Activated CD4-positive, alpha-beta T cell treated with anti-CD3 and anti-CD28 coated beads, Interleukin-2, amount 10 ng/mL, durations not matched to agents 24 days and 14 days (primary cell): ENCODE measurements at regions of chr7 and their contacts with region 1.

Region 1: GRCh38 chr7:44638611-44639557 is 32.5 kb downstream of the OGDH start:
- DNase-seq: peak; percentile 95
- H3K4me3 Mint-ChIP-seq: peak overlapping the region; percentile 82
- H3K27ac Mint-ChIP-seq: peak overlapping the region; percentile 99
- H3K4me1 Mint-ChIP-seq: peaks cover 66% of the 10 kb centered on the region
- H3K27me3 Mint-ChIP-seq: no peaks in the 10 kb centered on the region

Region 2: DNA sequence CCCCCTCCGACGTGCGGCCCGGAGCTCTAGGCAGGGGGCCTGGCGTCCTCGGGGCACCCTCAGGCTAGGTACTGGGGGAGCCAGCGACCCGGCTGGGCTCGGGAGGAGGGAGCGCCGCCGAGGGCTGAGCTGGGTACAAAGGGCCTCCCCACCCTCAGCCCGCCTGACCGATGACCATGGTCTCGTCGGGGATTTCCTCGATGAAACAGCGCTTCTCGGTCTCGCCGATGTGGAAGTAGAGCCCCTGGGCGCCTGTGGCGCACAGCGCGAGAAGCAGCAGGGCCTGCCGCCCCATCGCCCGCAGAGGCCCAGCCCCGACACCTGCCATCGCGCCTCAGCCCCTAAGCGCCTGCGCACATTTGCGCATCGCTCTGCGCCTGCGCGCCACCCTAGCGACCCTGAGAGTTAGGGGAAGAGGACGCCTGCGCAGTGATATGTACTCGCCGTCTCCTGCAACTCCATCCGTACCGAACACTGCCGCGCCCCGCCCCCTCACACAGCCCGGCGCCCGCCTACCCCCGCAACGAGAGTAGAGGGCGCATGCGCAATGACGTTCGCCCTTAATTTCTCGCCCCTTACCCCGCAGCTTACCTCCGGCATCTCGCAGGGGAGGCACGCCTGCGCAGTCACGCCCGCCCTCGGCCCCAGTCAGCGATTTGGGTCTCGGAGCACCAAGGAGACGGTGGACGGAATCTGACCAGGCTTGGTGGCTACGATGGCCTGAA is 56.8 kb before region 1 on chr7 and contains the start of gene TMED4:
- intact Hi-C with region 1: loop called (anchors 2 kb)
- DNase-seq: peak; percentile 100
- H3K4me3 Mint-ChIP-seq: peak within 1 kb of the TSS; percentile 92
- H3K27ac Mint-ChIP-seq: peak within 1 kb of the TSS; percentile 92
- H3K4me1 Mint-ChIP-seq: peaks cover 35% of the 10 kb centered on the region
- H3K27me3 Mint-ChIP-seq: peaks cover 4% of the 10 kb centered on the region
- total RNA-seq, gene TMED4: 78.4 and 80.2 TPM in 2 replicates

Region 3: GRCh38 chr7:44622307-44623151 is 16.4 kb before region 1 on chr7:
- intact Hi-C with region 1: loop called (anchors 1 kb)
- DNase-seq: peak; percentile 83
- H3K4me3 Mint-ChIP-seq: peak overlapping the region; percentile 53
- H3K27ac Mint-ChIP-seq: peak overlapping the region; percentile 84
- H3K4me1 Mint-ChIP-seq: peaks cover 71% of the 10 kb centered on the region
- H3K27me3 Mint-ChIP-seq: no peaks in the 10 kb centered on the region

Region 4: GRCh38 chr7:44748045-44748947 is 109.4 kb after region 1 on chr7 and contains the start of gene ZMIZ2:
- intact Hi-C with region 1: loop called (anchors 1 kb)
- DNase-seq: peak; percentile 97
- H3K4me3 Mint-ChIP-seq: peak within 1 kb of the TSS; percentile 93
- H3K27ac Mint-ChIP-seq: peak within 1 kb of the TSS; percentile 89
- H3K4me1 Mint-ChIP-seq: peaks cover 33% of the 10 kb centered on the region
- H3K27me3 Mint-ChIP-seq: no peaks in the 10 kb centered on the region
- total RNA-seq, gene ZMIZ2: 130 and 133 TPM in 2 replicates

Region 5: DNA sequence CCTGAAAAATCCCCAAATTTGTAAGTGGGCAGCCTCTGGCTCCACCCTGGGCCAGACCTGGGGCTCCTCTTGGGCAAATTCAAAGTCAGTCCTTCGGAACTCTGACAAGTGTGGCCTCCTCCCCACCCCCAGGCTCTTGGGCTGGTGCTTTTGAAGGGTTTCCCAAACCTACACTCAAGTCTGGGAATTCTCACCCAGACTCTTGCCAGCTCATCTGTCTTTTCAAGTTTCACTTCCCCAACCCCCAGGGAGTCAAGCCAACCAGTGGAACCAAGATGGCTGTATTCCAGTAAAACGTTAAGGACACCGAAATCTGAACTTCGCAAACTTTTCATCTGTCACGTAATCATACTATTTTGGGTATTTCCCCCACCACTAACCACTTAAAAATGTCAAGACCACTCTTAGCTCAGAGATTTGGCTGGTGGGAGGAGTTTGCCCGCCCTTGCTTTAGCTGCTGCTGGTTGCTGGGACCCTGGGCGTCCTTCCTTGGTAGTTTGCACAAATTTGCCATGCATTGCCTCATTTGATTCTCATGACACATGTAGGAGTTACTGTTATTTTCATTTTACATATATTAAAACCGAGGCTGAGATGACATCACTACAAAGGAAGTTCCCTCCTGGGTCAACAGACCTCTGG is 341.6 kb after region 1 on chr7:
- intact Hi-C with region 1: loop called (anchors 1 kb)
- DNase-seq: peak; percentile 89
- H3K4me3 Mint-ChIP-seq: peak overlapping the region; percentile 93
- H3K27ac Mint-ChIP-seq: peak overlapping the region; percentile 90
- H3K4me1 Mint-ChIP-seq: peaks cover 63% of the 10 kb centered on the region
- H3K27me3 Mint-ChIP-seq: no peaks in the 10 kb centered on the region